ENCODE measurements at regions of chr2 and their contacts with region 1.

Region 1: GRCh38 chr2:197255543-197255942 is 55.0 kb downstream of the ANKRD44 start:
- DNase-seq: peak; percentile 94
- ATAC-seq: peak; percentile 91
- H3K4me3 Mint-ChIP-seq: peak overlapping the region; percentile 76
- H3K27ac Mint-ChIP-seq: peak overlapping the region; percentile 92
- H3K4me1 Mint-ChIP-seq: peaks cover 78% of the 10 kb centered on the region
- H3K27me3 Mint-ChIP-seq: no peaks in the 10 kb centered on the region
- CTCF ChIP-seq: no peak

Region 2: GRCh38 chr2:197209742-197210408 is 45.7 kb before region 1 on chr2:
- CTCF ChIA-PET with region 1: interaction called, 6 read pairs
- POLR2A ChIA-PET with region 1: interaction called, 10 read pairs
- intact Hi-C with region 1: loop called (anchors 5 kb)
- DNase-seq: peak; percentile 67
- ATAC-seq: peak; percentile 45
- H3K4me3 Mint-ChIP-seq: peak overlapping the region; percentile 64
- H3K27ac Mint-ChIP-seq: peak overlapping the region; percentile 97
- H3K4me1 Mint-ChIP-seq: peaks cover 96% of the 10 kb centered on the region
- H3K27me3 Mint-ChIP-seq: no peaks in the 10 kb centered on the region
- CTCF ChIP-seq: no peak

Region 3: GRCh38 chr2:197239434-197239833 is 16.1 kb before region 1 on chr2:
- CTCF ChIA-PET with region 1: interaction called, 14 read pairs
- POLR2A ChIA-PET with region 1: interaction called, 6 read pairs
- intact Hi-C with region 1: loop called (anchors 2 kb)
- DNase-seq: no peak
- ATAC-seq: peak; percentile 45
- H3K4me3 Mint-ChIP-seq: peak overlapping the region; percentile 75
- H3K27ac Mint-ChIP-seq: peak overlapping the region; percentile 91
- H3K4me1 Mint-ChIP-seq: peaks cover 84% of the 10 kb centered on the region
- H3K27me3 Mint-ChIP-seq: no peaks in the 10 kb centered on the region
- CTCF ChIP-seq: no peak

Region 4: DNA sequence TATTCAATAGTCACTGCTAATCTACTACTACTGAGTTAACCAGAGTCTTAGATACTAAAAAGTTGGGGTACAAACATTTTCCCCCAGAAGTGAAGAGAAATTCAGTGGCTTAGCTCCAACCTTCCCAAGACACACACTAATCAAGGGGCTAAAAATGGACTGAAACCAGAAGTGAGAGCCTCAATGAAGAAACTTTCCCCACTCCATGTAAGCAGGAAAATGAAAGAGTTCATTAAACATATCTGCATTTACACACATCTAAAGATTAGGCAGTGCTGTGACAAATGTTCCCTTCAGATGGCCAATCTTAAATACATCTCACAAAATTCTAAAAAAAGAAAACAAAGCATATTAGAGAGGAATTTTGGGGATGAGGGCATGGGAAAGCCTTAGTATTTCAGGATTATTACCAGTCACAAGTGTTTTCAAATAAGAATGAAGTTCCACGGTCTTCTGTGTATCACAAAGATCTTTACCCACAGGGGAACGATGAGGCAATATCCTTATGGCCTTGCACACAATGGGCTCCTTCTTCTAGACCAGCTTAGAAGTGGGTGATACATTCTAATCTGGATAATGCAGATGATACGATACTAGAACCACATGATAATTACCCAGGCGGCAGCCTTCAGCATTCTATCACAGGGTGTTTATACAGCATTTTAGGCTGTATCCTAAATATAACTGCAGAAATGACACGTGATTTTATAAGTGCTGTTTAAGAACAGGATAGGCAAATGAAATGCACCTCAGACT is 37.9 kb after region 1 on chr2:
- CTCF ChIA-PET with region 1: interaction called, 4 read pairs
- POLR2A ChIA-PET with region 1: interaction called, 6 read pairs
- intact Hi-C with region 1: loop called (anchors 5 kb)
- DNase-seq: peak; percentile 69
- ATAC-seq: peak; percentile 73
- H3K4me3 Mint-ChIP-seq: peak overlapping the region; percentile 81
- H3K27ac Mint-ChIP-seq: peak overlapping the region; percentile 95
- H3K4me1 Mint-ChIP-seq: peaks cover 86% of the 10 kb centered on the region
- H3K27me3 Mint-ChIP-seq: no peaks in the 10 kb centered on the region
- CTCF ChIP-seq: no peak